ENCODE measurements at regions of chr11 and their contacts with region 1.

Region 1: DNA sequence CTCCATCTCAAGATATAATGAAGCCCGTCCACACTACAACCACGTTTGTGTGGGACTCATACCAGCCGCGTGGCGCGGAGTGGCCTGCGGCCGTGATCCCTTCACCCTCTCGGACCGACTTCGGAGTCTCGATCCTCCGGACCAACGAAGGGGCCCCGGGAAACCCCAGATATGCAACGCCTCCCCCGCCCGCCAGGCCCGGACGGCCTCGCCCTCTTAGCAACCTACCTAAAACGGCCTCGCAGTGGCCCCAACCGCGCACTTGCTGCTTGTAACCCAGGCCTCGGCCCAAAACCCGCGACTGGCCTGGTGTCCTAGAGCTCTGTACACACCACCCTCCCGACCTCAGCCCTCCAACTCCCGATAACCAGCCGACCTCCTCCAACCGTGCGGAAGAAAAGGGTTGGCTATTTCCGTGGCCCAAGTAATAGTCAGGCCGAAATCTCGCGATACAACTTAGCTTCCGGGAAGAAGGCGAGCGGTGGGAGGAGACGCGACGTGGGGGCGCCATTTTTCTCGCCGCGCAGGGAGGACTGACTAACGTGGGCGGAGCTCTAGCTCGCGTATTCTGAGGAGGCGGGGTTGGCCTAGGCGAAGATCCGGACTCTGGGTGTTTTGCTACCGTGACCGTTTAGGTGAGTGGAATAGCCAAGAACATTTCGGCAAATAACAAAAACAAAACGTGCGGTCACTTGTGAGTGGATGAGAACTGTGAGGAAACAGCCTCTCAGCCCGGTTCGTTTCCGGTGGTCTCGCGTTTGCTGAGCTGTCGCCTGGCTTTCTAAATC is at the starts of genes C11orf54 and TAF1D:
- DNase-seq: peak; percentile 91 to 99 (median 96)

Region 2: GRCh38 chr11:93662177-93662575 is 79.1 kb before region 1 on chr11:
- intact Hi-C with region 1: loop called (anchors 5 kb)
- DNase-seq: no peak

Region 3: DNA sequence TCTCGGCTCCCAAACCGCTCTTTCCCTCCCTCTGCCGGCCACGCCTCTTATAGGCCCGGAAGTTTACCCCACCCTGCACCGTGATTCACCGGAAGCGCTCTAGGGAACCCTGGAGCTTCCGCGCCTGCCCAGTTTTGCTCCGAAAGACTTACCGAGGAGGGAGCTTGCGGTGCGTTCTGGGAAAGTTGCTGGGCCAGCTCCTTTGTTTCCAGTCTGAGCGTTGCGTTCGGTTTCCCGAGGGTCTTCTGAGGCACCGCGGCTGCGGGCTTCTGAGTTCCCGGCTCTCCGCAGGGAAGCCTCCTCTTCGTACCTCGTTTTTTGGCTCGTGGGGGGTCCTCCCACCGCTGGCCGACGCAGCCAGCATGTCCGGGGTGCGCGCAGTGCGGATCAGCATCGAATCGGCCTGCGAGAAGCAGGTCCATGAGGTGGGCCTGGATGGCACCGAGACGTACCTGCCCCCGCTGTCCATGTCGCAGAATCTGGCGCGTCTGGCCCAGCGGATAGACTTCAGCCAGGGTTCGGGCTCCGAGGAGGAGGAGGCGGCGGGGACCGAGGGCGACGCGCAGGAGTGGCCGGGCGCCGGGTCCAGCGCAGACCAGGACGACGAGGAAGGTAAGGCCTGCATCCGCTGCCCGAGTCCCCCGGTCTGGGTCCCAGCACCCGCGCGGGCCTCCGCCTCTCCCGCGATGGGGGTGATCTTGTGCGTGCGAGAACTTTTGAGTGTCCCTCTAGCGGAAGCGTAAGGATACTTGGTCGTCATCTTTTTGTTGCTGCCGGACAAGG is 43.1 kb after region 1 on chr11 and contains the start of gene MED17:
- intact Hi-C with region 1: loop called (anchors 2 kb)
- DNase-seq: peak; percentile 88 to 98 (median 95)

Measured in head of caudate nucleus (tissue), 42 donors.